ENCODE measurements at regions of chr11 and their contacts with region 1.

Region 1: GRCh38 chr11:118240999-118241768 is 11.0 kb downstream of the MPZL3 start:
- DNase-seq: peak; percentile 90
- H3K4me3 Mint-ChIP-seq: peak overlapping the region; percentile 87
- H3K27ac Mint-ChIP-seq: peak overlapping the region; percentile 98
- H3K4me1 Mint-ChIP-seq: peaks cover 74% of the 10 kb centered on the region
- H3K27me3 Mint-ChIP-seq: peaks cover 2% of the 10 kb centered on the region

Region 2: GRCh38 chr11:118198370-118198769 is 42.8 kb before region 1 on chr11:
- intact Hi-C with region 1: loop called (anchors 1 kb)
- DNase-seq: peak; percentile 94
- H3K4me3 Mint-ChIP-seq: peak overlapping the region; percentile 62
- H3K27ac Mint-ChIP-seq: peak overlapping the region; percentile 82
- H3K4me1 Mint-ChIP-seq: peaks cover 21% of the 10 kb centered on the region
- H3K27me3 Mint-ChIP-seq: no peaks in the 10 kb centered on the region

Region 3: DNA sequence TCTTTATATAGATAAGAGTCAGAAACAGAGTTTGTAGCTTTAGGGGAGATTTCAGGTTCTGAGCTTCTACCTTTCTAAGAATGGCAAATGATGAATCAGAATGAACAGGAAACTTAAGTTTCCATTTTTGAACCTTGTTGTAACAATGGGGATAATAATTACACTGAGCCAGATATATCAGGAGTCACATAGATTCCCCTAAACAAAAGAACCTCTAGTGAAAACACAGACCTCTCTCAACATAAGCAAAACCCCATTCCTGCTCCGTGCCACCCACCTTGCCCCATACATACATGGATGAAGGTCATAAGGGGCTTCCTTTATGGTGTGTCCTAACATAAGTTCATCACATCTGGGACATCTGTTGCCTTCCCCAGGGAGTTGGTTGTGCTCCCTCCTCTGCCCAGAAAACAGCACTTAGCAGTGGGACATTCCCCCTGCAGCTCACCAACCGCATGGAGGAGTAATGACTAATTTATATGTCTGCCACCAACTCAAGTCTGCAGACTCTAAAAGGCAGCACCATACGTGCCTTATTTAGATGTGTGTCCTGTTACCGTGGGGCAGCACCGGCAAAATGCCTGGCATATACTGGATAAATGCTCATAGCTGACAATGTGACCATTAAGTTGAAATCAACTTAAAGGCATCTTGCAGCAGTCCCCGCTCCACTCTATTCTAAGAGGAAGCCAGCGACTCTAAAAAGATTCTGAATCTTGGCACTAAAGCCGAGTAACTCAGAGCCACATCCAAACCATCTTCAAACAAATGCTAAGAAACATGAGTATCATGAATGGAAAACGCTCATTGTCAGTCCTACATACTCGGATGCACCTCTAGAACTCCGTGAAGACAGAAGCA is 24.3 kb before region 1 on chr11:
- intact Hi-C with region 1: loop called (anchors 1 kb)
- DNase-seq: peak; percentile 84
- H3K4me3 Mint-ChIP-seq: peak overlapping the region; percentile 86
- H3K27ac Mint-ChIP-seq: peak overlapping the region; percentile 100
- H3K4me1 Mint-ChIP-seq: peaks cover 87% of the 10 kb centered on the region
- H3K27me3 Mint-ChIP-seq: no peaks in the 10 kb centered on the region

Region 4: DNA sequence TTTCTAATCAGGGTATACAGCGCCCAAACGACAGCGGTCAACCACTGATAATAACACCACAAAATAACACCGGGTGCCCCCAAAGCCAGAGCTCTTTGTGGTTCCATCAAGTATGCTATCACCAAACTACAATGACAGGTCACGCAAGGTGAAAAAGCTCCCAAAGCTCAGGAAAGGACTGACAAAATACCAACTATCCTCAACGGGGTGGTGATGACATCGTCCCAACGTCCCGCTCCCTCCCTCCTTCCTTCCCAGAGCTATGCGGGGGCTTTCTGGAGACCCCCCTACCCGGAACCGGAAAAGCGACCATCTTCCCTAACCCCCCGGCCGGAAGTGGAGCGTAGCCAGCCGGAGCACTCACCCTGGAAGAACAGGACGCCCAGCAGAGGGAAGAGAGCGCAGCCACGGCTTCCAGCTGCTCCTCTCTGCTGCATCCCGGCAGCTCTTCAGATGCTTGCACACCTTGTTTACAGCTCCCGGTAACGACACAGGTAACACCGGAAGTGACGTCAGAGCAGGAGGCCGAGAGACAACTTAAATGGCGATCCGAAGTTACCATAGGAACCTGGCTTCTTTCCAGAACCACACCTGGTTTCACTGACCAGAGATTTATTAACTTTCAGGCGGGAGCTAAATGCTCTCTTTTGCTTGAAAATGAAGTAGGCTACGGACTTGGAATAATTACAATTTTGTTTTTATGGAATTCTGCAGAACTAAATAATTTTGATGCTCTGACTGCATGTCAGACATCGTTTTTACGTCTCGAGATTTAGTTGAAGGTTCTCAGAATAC is 10.9 kb after region 1 on chr11 and contains the start of gene MPZL3:
- intact Hi-C with region 1: loop called (anchors 1 kb)
- DNase-seq: peak; percentile 94
- H3K4me3 Mint-ChIP-seq: peak within 1 kb of the TSS; percentile 97
- H3K27ac Mint-ChIP-seq: peak within 1 kb of the TSS; percentile 97
- H3K4me1 Mint-ChIP-seq: peaks cover 41% of the 10 kb centered on the region
- H3K27me3 Mint-ChIP-seq: no peaks in the 10 kb centered on the region
- total RNA-seq, gene MPZL3: 64.6 and 65.4 TPM in 2 replicates

Region 5: GRCh38 chr11:118338637-118339061 is 97.5 kb after region 1 on chr11:
- intact Hi-C with region 1: loop called (anchors 2 kb)
- DNase-seq: peak; percentile 97
- H3K4me3 Mint-ChIP-seq: peak overlapping the region; percentile 90
- H3K27ac Mint-ChIP-seq: peak overlapping the region; percentile 100
- H3K4me1 Mint-ChIP-seq: peaks cover 65% of the 10 kb centered on the region
- H3K27me3 Mint-ChIP-seq: no peaks in the 10 kb centered on the region